ENCODE measurements at regions of chr18 and their contacts with region 1.

Region 1: GRCh38 chr18:50266248-50266704 is at the start of gene CFAP53:
- DNase-seq: peak; percentile 95
- CTCF ChIP-seq: no peak

Region 2: DNA sequence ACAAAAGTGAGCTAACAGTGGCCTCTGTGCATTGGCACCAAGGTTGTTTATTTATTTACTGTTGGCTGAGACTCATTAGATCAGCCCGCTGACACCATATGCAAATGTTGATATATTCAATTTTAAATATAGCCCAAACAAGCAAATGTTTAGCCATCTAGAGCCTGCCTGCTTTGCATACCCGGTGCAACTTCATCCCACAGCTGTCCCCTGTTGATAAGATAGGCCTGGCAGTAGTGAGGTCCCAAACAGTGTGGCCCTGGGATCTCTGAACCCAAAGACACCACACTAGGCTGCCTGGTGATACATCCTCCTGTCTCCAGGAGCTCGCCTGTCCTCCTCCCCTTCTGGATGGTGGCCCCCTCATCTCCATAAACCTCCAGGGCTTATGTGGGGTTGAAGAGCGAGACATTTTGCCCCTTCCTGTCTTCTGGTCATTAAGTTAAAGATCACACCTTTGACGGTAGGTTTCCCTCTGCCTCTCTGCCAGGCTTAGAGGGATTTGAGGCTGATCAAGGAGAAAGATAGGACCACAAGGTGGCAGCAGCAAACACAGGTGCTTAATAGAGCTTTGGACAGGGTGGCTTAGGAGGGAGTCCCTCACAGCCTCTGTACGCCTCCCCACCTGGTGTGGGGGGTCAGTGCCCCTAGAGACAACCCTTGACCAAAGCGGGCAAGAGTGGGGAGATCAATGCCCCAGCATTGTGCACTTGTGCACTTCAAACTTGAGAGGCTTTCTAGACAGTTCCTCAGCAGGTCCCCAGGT is 47.7 kb before region 1 on chr18:
- CTCF ChIA-PET with region 1: interaction called, 13 read pairs
- POLR2A ChIA-PET with region 1: no interaction called
- DNase-seq: peak; percentile 59
- CTCF ChIP-seq: peak; percentile 39

Region 3: DNA sequence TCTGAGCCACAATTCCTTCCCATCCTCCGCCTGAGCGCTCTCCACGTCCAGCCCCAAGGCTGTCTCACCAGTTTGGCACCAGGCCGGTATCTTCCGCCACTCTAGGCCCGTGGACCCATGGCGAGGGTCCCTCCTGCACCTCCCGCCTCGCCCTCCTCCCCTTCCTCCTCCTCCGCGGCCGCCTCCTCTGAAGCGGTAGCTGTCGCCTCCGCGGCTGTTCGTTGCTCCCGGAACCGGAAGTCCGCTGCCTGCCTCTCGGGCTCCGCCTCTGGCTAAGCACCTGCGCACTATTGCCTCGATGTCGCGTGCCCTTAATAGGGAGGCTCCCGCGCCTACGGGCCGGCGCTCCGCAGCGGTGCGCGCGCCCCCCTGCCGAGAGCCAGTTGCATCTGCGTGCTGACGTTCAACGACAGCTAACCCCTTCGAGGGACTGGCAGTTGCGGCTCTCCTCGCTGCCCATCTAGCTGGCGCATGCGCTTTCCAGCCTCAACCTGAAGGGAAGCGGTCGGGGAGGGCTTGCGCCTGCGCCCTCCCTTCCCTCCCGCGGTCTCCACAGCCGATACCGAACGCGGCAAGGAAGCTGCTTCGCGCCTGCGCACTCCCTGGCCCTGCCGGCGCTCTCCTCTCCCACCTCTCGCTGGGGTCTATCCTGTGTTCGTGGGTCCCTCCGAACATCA is 15.2 kb after region 1 on chr18 and contains the start of gene MBD1:
- CTCF ChIA-PET with region 1: interaction called, 49 read pairs
- POLR2A ChIA-PET with region 1: interaction called, 3 read pairs
- DNase-seq: peak; percentile 98
- CTCF ChIP-seq: no peak

Region 4: GRCh38 chr18:50287441-50288347 is 21.4 kb after region 1 on chr18 and contains the start of gene CXXC1:
- CTCF ChIA-PET with region 1: interaction called, 49 read pairs
- POLR2A ChIA-PET with region 1: no interaction called
- DNase-seq: peak; percentile 91
- CTCF ChIP-seq: peak; percentile 48

Region 5: GRCh38 chr18:50320719-50321118 is 54.4 kb after region 1 on chr18:
- CTCF ChIA-PET with region 1: interaction called, 11 read pairs
- POLR2A ChIA-PET with region 1: no interaction called
- DNase-seq: no peak
- CTCF ChIP-seq: no peak

Region 6: GRCh38 chr18:50518788-50519546 is 252.7 kb after region 1 on chr18:
- CTCF ChIA-PET with region 1: no interaction called
- POLR2A ChIA-PET with region 1: no interaction called
- DNase-seq: no peak
- CTCF ChIP-seq: no peak

Measured in GM10248 (cell line).